ENCODE measurements at regions of chr2 and their contacts with region 1.

Region 1: GRCh38 chr2:85707304-85707703 is 13.1 kb downstream of the GNLY start:
- DNase-seq: no peak
- H3K4me3 ChIP-seq: no peak overlapping the region
- H3K27ac ChIP-seq: no peak overlapping the region
- H3K4me1 ChIP-seq: peaks cover 0 to 4% (median 1%) of the 10 kb centered on the region in 4 experiments; a peak in 3 of 7 replicates
- H3K27me3 ChIP-seq: no peaks in the 10 kb centered on the region; a peak in 1 of 7 replicates
- CTCF ChIP-seq: peak; percentile 0 to 94 (median 72)
- EP300 ChIP-seq: no peak
- POLR2A ChIP-seq: no peak
- RAD21 ChIP-seq: peak; percentile 65 to 72

Region 2: GRCh38 chr2:85602476-85603234 is 104.6 kb before region 1 on chr2 and contains the start of gene TMEM150A:
- CTCF ChIA-PET with region 1: no interaction called
- POLR2A ChIA-PET with region 1: no interaction called
- DNase-seq: peak; percentile 54 to 91
- H3K4me3 ChIP-seq: peak within 1 kb of the TSS; percentile 62 to 89 (median 82)
- H3K27ac ChIP-seq: peak within 1 kb of the TSS; percentile 20; the same call in 1 of the 2 replicates
- H3K4me1 ChIP-seq: peaks cover 0 to 5% (median 2%) of the 10 kb centered on the region in 4 experiments; a peak in 5 of 7 replicates
- H3K27me3 ChIP-seq: no peaks in the 10 kb centered on the region
- CTCF ChIP-seq: peak; percentile 11 to 23 (median 14); a peak in 3 of 4 replicates
- EP300 ChIP-seq: no peak
- POLR2A ChIP-seq: peak; percentile 19 to 51
- RAD21 ChIP-seq: peak in 1 of 2 experiments; percentile 7; a peak in 1 of 4 replicates
- total RNA-seq, gene TMEM150A: 19.8 and 22.4 TPM in 2 replicates

Region 3: DNA sequence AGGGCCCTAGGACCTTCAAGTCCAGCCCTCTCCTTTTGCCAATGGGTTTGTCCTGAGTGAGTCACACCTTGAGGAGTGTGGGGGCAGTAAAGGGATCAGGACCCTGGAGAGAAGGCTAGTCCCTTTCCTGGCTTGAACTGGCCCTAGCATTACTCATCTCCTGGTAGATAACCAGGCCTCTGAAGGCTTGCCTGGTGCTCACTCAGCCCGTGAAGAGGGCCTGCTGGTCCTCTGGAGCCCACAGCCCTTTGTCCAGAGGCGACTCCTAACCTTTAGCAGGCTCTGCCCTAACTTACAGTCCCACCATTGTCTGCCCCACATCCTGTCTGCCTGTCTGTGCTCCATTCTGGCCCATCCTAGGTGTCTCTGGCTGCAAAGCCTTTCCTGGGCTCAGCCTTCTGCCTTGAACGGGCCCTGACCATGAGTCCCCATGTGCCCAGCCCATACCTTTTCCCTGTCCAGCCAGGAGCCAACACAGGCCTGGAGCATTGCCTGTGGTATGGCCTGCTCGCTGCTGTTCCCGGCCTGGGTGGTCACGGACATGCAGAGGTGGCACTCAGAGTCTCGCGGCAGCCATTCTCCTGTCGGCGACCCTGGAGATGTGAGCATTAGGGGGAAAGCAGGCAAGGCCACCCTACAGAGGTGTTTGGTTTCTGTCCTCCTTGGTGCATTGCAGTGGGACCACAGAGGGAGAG is 44.3 kb before region 1 on chr2:
- CTCF ChIA-PET with region 1: interaction called, 16 read pairs
- POLR2A ChIA-PET with region 1: interaction called, 4 read pairs
- DNase-seq: peak in 1 of 2 experiments; percentile 25
- H3K4me3 ChIP-seq: no peak overlapping the region
- H3K27ac ChIP-seq: no peak overlapping the region
- H3K4me1 ChIP-seq: peaks cover 0 to 3% (median under 1%) of the 10 kb centered on the region in 4 experiments; a peak in 2 of 7 replicates
- H3K27me3 ChIP-seq: no peaks in the 10 kb centered on the region
- CTCF ChIP-seq: no peak
- EP300 ChIP-seq: no peak
- POLR2A ChIP-seq: no peak
- RAD21 ChIP-seq: no peak

Region 4: DNA sequence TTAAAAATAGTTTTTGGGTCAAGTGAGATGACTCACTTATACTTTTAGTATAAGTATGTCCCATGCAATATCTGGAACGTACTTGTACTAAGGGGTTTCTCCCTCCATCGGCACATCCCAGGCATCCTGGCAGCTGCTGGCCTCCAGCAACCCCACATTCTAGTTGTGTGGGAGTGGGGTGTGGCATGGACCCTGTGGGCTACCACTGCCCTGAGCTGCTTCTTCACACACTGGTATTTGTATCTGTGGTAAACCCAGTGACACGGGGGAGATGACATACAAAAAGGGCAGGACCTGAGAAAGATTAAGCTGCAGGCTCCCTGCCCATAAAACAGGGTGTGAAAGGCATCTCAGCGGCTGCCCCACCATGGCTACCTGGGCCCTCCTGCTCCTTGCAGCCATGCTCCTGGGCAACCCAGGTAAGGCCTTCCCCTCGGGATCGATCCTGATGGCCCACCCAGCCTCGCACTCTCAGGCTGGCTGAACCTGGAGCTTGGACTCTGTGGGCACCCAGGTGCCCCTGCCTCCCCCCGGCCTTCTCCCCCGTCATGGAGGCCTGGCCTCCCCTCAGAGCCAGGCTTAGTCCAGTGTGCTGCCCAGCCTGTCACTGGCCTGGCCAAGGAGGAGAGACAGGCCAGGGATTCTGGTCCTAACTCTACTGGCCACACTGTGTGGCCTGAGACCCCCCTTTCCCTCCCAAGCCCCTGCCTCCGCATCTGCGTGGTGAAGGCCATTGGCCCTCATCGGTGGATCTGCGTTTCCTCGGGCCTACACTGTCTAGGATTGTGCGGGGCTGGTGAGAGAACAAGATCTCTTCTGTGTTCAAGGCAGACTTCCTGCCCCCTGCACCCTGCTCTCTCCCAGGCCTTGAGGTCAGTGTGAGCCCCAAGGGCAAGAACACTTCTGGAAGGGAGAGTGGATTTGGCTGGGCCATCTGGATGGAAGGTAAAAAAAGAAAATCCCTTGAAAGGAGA is 13.0 kb before region 1 on chr2 and contains the start of gene GNLY:
- CTCF ChIA-PET with region 1: interaction called, 36 read pairs
- POLR2A ChIA-PET with region 1: no interaction called
- DNase-seq: no peak
- H3K4me3 ChIP-seq: no peak within 1 kb of the TSS
- H3K27ac ChIP-seq: no peak within 1 kb of the TSS
- H3K4me1 ChIP-seq: peaks cover 0 to 2% (median 0%) of the 10 kb centered on the region in 4 experiments; a peak in 1 of 7 replicates
- H3K27me3 ChIP-seq: no peaks in the 10 kb centered on the region
- CTCF ChIP-seq: no peak
- EP300 ChIP-seq: no peak
- POLR2A ChIP-seq: no peak
- RAD21 ChIP-seq: no peak
- total RNA-seq, gene GNLY: not detected in 2 replicates

Region 5: DNA sequence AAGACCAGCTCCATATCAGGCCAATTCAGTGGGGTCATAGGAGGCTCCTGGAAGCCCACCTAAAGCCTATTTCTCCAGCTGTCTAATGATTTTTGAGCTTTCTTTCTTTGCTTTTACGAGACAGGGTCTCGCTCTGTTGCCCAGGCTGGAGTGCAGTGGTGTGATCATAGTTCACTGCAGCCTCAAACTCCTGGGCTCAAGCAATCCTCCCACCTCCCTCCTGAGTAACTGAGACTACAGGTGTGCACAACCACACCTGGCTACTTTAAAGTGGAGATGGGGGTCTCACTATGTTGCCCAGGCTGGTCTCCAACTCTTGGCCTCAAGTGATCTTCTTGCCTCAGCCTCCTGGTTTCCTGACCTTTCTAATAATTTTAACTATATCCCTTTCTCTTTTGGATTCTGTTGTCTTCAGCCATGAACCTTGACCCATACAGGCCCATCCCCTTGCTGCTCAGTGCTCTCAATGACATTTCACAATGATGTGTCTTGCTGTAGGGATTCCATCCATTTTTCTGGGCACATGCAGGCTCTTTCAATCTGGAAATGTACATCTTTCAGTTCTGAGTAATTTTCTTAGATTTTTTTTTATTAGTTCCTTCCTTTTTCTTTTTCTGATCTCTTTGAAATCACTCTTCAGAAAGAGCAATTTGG is 16.5 kb after region 1 on chr2:
- CTCF ChIA-PET with region 1: interaction called, 61 read pairs
- POLR2A ChIA-PET with region 1: interaction called, 5 read pairs
- DNase-seq: no peak
- H3K4me3 ChIP-seq: no peak overlapping the region
- H3K27ac ChIP-seq: no peak overlapping the region
- H3K4me1 ChIP-seq: no peaks in the 10 kb centered on the region
- H3K27me3 ChIP-seq: no peaks in the 10 kb centered on the region
- CTCF ChIP-seq: no peak
- EP300 ChIP-seq: no peak
- POLR2A ChIP-seq: no peak
- RAD21 ChIP-seq: no peak

Region 6: GRCh38 chr2:85819811-85820510 is 112.7 kb after region 1 on chr2:
- CTCF ChIA-PET with region 1: no interaction called
- POLR2A ChIA-PET with region 1: no interaction called
- DNase-seq: no peak
- H3K4me3 ChIP-seq: no peak overlapping the region
- H3K27ac ChIP-seq: no peak overlapping the region
- H3K4me1 ChIP-seq: no peaks in the 10 kb centered on the region; a peak in 3 of 7 replicates
- H3K27me3 ChIP-seq: no peaks in the 10 kb centered on the region; a peak in 1 of 7 replicates
- CTCF ChIP-seq: no peak
- EP300 ChIP-seq: no peak
- POLR2A ChIP-seq: no peak
- RAD21 ChIP-seq: no peak

Region 7: DNA sequence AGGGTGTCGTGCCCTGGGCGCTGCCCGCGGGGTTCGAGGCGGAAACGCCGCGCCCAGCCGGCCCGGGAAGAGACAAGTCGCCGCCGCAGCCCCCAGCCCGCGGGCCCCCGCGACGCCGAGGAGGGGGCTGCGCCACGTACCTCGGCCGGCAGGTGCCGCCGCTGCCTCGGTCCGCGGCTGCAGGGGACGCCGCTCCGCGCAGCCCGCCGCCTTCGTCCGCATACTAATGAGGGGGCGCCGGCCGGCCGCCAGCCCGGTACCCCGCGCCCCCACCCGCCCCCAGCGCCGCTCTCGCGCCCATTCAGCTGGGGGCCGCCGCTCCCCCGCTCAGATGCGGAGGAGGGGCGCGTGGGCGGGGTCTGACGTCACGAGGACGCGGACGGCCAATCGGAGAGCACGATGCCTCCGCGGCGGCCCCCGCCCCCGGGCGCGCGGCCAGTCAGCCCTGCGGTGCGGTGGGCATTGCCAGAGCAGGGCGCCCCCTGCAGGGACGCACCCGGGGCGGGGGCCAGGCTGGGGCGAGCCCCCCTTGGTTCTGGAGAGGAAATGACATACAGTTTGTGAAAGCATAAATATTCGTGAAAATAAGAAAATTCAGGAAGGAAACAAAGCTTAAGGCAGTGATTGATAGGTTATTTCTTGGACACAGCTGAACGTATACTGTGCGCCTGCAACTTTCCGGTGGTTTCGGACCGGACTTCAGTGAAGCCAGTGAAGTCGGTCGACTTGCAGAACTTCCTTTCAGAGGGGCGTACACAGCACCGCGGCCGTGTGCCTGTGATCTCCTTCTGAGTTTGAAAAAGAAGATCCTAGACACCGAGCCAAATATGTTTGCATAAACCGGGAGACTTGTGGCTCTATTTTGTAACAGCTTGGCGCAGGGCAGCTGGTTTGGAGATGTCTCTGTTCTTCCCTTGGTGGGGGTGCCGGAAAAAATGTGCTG is 181.7 kb after region 1 on chr2 and contains the start of gene ST3GAL5:
- CTCF ChIA-PET with region 1: no interaction called
- POLR2A ChIA-PET with region 1: no interaction called
- DNase-seq: peak; percentile 49 to 94
- H3K4me3 ChIP-seq: peak within 1 kb of the TSS; percentile 53 to 88 (median 76)
- H3K27ac ChIP-seq: no peak within 1 kb of the TSS
- H3K4me1 ChIP-seq: peaks cover 5 to 8% (median 6%) of the 10 kb centered on the region in 4 experiments
- H3K27me3 ChIP-seq: peaks cover 0 to 19% (median 13%) of the 10 kb centered on the region in 4 experiments; a peak in 6 of 7 replicates
- CTCF ChIP-seq: peak; percentile 55 to 69 (median 69)
- EP300 ChIP-seq: no peak
- POLR2A ChIP-seq: no peak
- RAD21 ChIP-seq: peak; percentile 25 to 54; a peak in 3 of 4 replicates
- total RNA-seq, gene ST3GAL5: 3.0 and 4.5 TPM in 2 replicates

Measured in H1 (cell line).